Activated B cell treated with CpG ODN at 0.5 μM for 24 hours (primary cell): ENCODE measurements at regions of chr2 and their contacts with region 1.

Region 1: GRCh38 chr2:105092797-105093196 is 54.9 kb downstream of the MRPS9 start:
- DNase-seq: no peak
- ATAC-seq: no peak
- H3K4me3 Mint-ChIP-seq: no peak overlapping the region
- H3K27ac Mint-ChIP-seq: no peak overlapping the region
- H3K4me1 Mint-ChIP-seq: no peaks in the 10 kb centered on the region
- H3K27me3 Mint-ChIP-seq: no peaks in the 10 kb centered on the region
- CTCF ChIP-seq: no peak

Region 2: DNA sequence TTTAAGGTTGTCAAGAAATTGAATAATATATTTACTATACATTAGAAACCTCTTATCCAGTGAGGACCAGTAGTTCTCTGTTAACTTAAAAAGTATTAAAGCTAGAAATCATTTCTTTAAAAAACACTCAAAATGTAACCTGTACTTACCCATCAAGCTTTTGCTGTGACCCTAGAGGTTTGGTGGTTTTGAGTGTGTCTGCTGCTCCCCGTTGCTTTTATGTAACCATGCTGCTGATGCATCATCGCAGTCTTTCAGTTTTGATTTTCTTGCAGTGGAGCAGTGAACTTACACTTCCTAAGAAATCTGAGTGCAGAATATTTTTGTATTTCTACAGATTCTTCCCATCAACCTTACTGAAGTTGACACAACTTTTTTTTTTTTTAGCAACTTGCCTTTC is 20.8 kb before region 1 on chr2:
- CTCF ChIA-PET with region 1: no interaction called
- POLR2A ChIA-PET with region 1: no interaction called
- intact Hi-C with region 1: loop called (anchors 1 kb)
- DNase-seq: no peak
- ATAC-seq: no peak
- H3K4me3 Mint-ChIP-seq: no peak overlapping the region
- H3K27ac Mint-ChIP-seq: no peak overlapping the region
- H3K4me1 Mint-ChIP-seq: no peaks in the 10 kb centered on the region
- H3K27me3 Mint-ChIP-seq: no peaks in the 10 kb centered on the region
- CTCF ChIP-seq: no peak

Region 3: DNA sequence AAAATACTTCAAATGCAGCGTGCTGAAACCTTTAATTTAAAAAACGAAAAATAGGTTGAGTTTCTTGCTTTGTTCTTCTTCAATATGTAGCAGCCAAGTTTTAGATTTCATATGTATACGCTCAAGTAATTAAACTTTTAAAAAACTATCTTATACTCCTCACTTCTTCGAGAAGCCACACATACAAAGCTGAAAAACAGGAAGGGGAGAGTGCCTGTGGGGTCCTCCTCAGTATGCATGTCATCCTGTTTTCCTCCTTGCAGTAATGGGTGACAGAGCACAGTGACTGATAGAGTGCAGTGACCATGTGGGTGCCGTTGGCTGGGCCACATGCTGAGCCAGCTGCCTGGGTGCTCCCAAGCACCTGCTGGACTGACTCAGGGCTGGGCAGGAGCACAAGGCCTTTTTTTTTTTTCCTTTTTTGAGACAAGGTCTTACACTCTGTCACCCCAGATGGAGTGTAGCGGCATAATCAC is 1068.0 kb after region 1 on chr2:
- CTCF ChIA-PET with region 1: no interaction called
- POLR2A ChIA-PET with region 1: no interaction called
- intact Hi-C with region 1: no loop called
- DNase-seq: no peak
- ATAC-seq: peak; percentile 74
- H3K4me3 Mint-ChIP-seq: peak overlapping the region; percentile 88
- H3K27ac Mint-ChIP-seq: peak overlapping the region; percentile 89
- H3K4me1 Mint-ChIP-seq: peaks cover 75% of the 10 kb centered on the region
- H3K27me3 Mint-ChIP-seq: no peaks in the 10 kb centered on the region
- CTCF ChIP-seq: no peak